Caco-2 (cell line): ENCODE measurements at regions of chr13 and their contacts with region 1.

Region 1: GRCh38 chr13:48595431-48596429 is 58.0 kb upstream of the CYSLTR2 start:
- DNase-seq: peak; percentile 65 to 78
- H3K4me3 ChIP-seq: no peak overlapping the region
- H3K4me3 Mint-ChIP-seq: no peak overlapping the region
- H3K27ac Mint-ChIP-seq: peak overlapping the region; percentile 39
- H3K4me1 ChIP-seq: no peaks in the 10 kb centered on the region; the same call in 1 of the 2 replicates
- H3K4me1 Mint-ChIP-seq: no peaks in the 10 kb centered on the region
- H3K27me3 ChIP-seq: no peaks in the 10 kb centered on the region
- H3K27me3 Mint-ChIP-seq: no peaks in the 10 kb centered on the region
- CTCF ChIP-seq: peak; percentile 70 to 80

Region 2: DNA sequence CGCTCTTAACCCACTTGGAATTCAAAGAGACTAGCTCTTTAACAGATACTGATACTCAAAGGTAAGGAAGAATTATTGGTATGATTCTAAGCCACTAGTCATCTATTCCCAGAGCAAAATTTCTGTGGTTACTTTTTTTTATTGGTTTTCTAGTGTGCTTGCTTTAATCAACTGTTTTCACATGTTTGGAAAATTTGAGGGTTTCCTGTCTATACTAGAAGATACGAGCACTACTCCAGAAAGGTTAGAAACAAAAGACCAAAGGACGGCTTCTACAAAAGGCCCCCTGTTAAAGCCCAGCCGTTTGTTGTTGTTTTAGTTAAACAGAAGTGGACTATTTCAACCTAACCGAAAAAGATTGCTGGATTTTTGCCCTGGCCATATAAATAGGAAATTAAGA is 164.3 kb before region 1 on chr13:
- CTCF ChIA-PET with region 1: no interaction called
- POLR2A ChIA-PET with region 1: no interaction called
- intact Hi-C with region 1: no loop called
- DNase-seq: no peak
- H3K4me3 ChIP-seq: no peak overlapping the region
- H3K4me3 Mint-ChIP-seq: no peak overlapping the region
- H3K27ac Mint-ChIP-seq: no peak overlapping the region
- H3K4me1 ChIP-seq: no peaks in the 10 kb centered on the region
- H3K4me1 Mint-ChIP-seq: no peaks in the 10 kb centered on the region
- H3K27me3 ChIP-seq: no peaks in the 10 kb centered on the region
- H3K27me3 Mint-ChIP-seq: no peaks in the 10 kb centered on the region
- CTCF ChIP-seq: no peak

Region 3: DNA sequence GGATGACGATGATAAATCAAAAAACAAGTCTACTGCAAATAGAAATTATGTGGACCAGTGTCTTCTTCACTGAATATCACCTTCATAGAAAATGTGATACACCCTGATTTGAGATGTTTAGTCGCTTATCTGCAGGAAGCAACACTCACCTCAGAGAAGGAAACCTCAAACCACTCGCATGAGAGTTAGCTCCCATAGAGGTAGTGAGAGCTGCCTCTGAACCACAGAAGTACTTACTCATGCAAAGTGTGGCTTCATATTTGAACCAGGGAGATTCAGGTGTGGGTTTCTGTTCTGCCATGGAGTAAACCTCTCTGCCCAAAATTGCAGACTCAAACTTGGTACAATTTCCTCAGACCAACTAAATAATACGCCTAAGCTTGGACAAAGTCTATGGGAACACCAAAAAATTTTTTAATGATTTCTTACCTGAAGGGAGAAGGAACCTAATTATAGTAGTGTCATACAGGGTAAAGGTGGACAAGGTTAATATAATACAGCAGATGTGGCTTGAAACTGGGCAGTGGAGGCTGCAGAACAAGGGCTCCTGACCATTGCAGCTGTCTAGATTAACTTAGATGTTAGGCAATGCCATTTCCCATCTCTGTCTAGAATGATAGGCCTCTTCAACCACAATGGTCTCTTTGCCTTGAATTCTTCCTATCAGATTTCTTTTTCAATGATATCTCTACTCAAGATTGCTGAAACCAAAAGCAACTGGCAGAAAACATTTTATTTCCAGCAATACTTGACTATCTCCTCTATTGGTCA is 33.2 kb before region 1 on chr13:
- CTCF ChIA-PET with region 1: no interaction called
- POLR2A ChIA-PET with region 1: no interaction called
- intact Hi-C with region 1: no loop called
- DNase-seq: no peak
- H3K4me3 ChIP-seq: no peak overlapping the region
- H3K4me3 Mint-ChIP-seq: no peak overlapping the region
- H3K27ac Mint-ChIP-seq: no peak overlapping the region
- H3K4me1 ChIP-seq: no peaks in the 10 kb centered on the region
- H3K4me1 Mint-ChIP-seq: peaks cover 6% of the 10 kb centered on the region
- H3K27me3 ChIP-seq: no peaks in the 10 kb centered on the region
- H3K27me3 Mint-ChIP-seq: no peaks in the 10 kb centered on the region
- CTCF ChIP-seq: no peak

Region 4: DNA sequence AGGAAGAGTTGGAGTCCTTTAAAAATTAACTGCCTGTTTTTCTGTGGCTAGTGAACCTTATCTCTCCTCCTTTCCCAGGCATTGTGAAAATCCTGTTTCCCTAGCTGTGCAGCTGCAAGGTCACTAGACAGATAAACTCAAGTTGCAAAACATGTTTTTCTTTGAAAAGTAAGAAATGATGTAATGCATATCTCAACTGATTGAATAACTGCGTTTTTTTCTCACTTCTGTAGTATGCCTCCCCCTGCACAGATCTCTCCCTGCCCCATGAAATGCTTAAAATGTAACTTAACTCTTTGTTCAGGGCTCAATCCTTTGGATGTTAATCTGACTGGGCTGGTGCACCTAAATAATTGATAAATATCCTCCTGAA is 30.3 kb after region 1 on chr13:
- CTCF ChIA-PET with region 1: no interaction called
- POLR2A ChIA-PET with region 1: no interaction called
- intact Hi-C with region 1: loop called (anchors 1 kb)
- DNase-seq: peak; percentile 72 to 78
- H3K4me3 ChIP-seq: no peak overlapping the region
- H3K4me3 Mint-ChIP-seq: peak overlapping the region; percentile 1
- H3K27ac Mint-ChIP-seq: peak overlapping the region; percentile 62
- H3K4me1 ChIP-seq: peaks cover 42% of the 10 kb centered on the region
- H3K4me1 Mint-ChIP-seq: peaks cover 40% of the 10 kb centered on the region
- H3K27me3 ChIP-seq: no peaks in the 10 kb centered on the region
- H3K27me3 Mint-ChIP-seq: no peaks in the 10 kb centered on the region
- CTCF ChIP-seq: no peak

Region 5: DNA sequence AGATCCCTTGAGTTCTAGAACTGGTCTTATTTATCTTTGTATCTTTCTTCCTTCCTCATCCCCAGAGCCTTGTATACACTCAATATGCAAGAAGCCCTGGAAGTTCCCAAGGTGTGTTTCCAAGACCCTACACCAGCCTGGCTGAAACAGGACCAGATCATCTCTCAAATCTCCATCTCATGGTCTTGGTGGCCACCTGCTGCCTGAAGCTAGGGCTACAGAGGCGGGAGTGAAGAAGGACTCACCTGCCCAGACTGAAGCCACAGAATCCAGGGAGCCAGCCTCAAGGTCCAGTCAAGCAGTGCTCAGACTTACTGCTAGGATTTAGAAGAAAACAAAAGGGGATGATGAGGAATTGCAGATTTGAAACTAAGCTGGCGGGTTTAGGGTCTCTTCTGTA is 51.9 kb after region 1 on chr13:
- CTCF ChIA-PET with region 1: interaction called, 5 read pairs
- POLR2A ChIA-PET with region 1: no interaction called
- intact Hi-C with region 1: loop called (anchors 1 kb)
- DNase-seq: peak; percentile 47 to 49
- H3K4me3 ChIP-seq: no peak overlapping the region
- H3K4me3 Mint-ChIP-seq: no peak overlapping the region
- H3K27ac Mint-ChIP-seq: no peak overlapping the region
- H3K4me1 ChIP-seq: no peaks in the 10 kb centered on the region
- H3K4me1 Mint-ChIP-seq: no peaks in the 10 kb centered on the region
- H3K27me3 ChIP-seq: no peaks in the 10 kb centered on the region; the same call in 1 of the 2 replicates
- H3K27me3 Mint-ChIP-seq: no peaks in the 10 kb centered on the region
- CTCF ChIP-seq: peak; percentile 43 to 53

Region 6: GRCh38 chr13:48731957-48732569 is 136.3 kb after region 1 on chr13:
- CTCF ChIA-PET with region 1: no interaction called
- POLR2A ChIA-PET with region 1: no interaction called
- intact Hi-C with region 1: loop called (anchors 1 kb)
- DNase-seq: peak in 1 of 2 experiments; percentile 51
- H3K4me3 ChIP-seq: no peak overlapping the region
- H3K4me3 Mint-ChIP-seq: no peak overlapping the region
- H3K27ac Mint-ChIP-seq: no peak overlapping the region
- H3K4me1 ChIP-seq: no peaks in the 10 kb centered on the region
- H3K4me1 Mint-ChIP-seq: no peaks in the 10 kb centered on the region
- H3K27me3 ChIP-seq: 0 out of 2 replicates have a peak, but pooled peaks cover 2% of the 10 kb centered on the region
- H3K27me3 Mint-ChIP-seq: peaks cover 11% of the 10 kb centered on the region
- CTCF ChIP-seq: peak; percentile 51 to 57

Region 7: DNA sequence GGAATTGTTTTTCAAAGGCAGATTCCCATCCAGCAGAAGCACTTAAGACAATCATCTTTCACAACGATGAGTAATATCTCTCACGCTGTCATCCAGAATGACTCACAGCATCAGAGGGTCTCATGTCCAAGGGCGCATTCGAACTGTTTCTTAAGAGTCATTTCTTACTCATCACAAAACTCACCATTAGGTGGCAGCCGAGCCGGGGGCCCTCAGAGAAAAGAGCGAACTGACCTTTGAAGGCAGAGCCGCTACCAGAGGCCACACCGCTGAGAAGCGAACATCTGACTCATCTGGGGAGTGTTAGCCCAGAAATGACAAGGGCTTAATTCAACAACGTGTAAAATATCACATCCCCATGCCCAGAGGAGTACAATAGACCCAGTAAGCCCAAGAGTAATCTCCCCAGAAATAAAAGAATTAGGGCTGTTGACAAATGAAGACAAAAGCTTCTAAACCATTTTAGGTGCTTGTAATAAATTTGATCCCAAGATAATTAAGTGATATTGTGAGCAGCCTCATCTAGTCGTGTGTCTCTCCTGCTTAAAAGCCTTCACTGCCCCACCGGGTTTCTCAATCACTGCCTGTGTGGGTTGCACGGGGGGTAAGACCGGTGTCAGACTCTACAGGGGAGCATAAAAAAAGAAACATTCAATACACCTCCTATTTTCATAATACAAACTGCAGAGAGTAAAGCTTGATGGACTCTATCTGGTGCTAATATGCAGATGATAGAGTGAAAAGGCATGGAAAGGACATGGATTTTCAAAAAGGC is 154.2 kb after region 1 on chr13:
- CTCF ChIA-PET with region 1: no interaction called
- POLR2A ChIA-PET with region 1: no interaction called
- intact Hi-C with region 1: loop called (anchors 1 kb)
- DNase-seq: peak; percentile 68 to 71
- H3K4me3 ChIP-seq: no peak overlapping the region
- H3K4me3 Mint-ChIP-seq: no peak overlapping the region
- H3K27ac Mint-ChIP-seq: no peak overlapping the region
- H3K4me1 ChIP-seq: no peaks in the 10 kb centered on the region
- H3K4me1 Mint-ChIP-seq: peaks cover 6% of the 10 kb centered on the region
- H3K27me3 ChIP-seq: no peaks in the 10 kb centered on the region
- H3K27me3 Mint-ChIP-seq: no peaks in the 10 kb centered on the region
- CTCF ChIP-seq: peak; percentile 56 to 68